ENCODE measurements at regions of chr7 and their contacts with region 1.

Region 1: DNA sequence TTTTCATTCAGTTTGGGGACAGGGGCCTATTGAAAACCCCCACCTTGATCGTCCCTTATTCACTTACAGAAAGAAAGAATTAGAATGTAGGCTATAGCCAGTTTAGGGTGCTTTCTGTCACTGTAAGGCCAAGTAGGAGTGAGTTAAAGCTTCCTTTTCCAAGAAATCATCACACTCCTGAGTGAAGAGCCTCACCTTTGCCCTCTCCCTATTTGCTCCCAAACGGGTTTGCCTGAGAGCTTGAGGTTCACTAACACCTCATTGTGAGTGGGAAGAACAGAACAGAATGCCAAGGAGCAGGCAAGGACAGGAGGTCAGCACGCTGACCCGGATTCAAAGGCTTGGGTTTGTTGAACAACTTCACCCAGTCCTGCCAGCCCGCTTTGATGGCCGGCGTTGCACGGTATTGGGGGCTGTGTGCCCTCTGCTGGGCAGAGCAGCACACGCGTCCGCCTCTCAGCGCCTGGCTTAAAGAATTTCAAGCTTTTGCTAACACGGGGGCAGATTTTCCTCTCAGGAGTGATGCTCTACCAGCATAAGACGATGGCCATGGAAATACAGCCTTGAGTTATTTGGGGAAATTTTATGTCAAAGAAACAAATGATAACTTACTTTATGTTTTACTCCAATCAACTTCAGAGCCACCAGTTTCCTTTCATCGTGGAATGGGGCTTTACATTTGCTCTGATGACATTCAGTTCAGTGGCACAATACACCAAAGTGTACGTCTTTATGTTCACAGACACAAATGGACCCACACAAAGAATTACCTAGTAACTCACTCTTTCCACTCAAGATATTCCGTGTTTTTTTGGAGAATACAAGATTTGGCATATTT is 470.0 kb downstream of the SUGCT start:
- DNase-seq: peak; percentile 51 to 76
- H3K4me3 ChIP-seq: no peak overlapping the region
- H3K27ac ChIP-seq: no peak overlapping the region
- H3K4me1 ChIP-seq: no peaks in the 10 kb centered on the region; a peak in 1 of 7 replicates
- H3K27me3 ChIP-seq: no peaks in the 10 kb centered on the region
- CTCF ChIP-seq: peak; percentile 92 to 94 (median 93)
- EP300 ChIP-seq: no peak
- POLR2A ChIP-seq: no peak
- RAD21 ChIP-seq: peak; percentile 92 to 93

Region 2: GRCh38 chr7:40331915-40332314 is 272.9 kb before region 1 on chr7:
- CTCF ChIA-PET with region 1: interaction called, 15 read pairs
- POLR2A ChIA-PET with region 1: no interaction called
- DNase-seq: no peak
- H3K4me3 ChIP-seq: no peak overlapping the region
- H3K27ac ChIP-seq: no peak overlapping the region
- H3K4me1 ChIP-seq: no peaks in the 10 kb centered on the region
- H3K27me3 ChIP-seq: no peaks in the 10 kb centered on the region
- CTCF ChIP-seq: no peak
- EP300 ChIP-seq: no peak
- POLR2A ChIP-seq: no peak
- RAD21 ChIP-seq: no peak

Region 3: DNA sequence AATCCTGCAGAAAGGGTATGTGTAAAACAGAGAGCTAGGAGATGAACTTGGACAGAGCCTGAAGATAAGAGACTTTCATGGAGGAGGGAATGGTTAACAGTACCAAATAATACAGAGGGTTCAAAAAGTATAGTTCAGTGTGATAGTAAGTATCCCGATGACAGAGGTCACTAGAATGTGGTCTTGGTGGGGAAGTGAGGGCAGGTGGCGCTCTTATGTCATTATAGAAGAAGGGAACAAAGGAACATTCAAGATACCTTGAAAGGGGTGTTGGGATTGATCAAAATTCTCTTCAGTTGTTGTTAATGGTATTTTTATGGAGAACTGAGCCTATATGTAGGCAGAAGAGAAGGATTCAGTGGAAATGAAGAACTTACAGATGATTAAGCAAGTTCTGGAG is 157.5 kb before region 1 on chr7:
- CTCF ChIA-PET with region 1: interaction called, 14 read pairs
- POLR2A ChIA-PET with region 1: no interaction called
- DNase-seq: no peak
- H3K4me3 ChIP-seq: no peak overlapping the region
- H3K27ac ChIP-seq: no peak overlapping the region
- H3K4me1 ChIP-seq: no peaks in the 10 kb centered on the region
- H3K27me3 ChIP-seq: no peaks in the 10 kb centered on the region
- CTCF ChIP-seq: peak; percentile 9 to 35 (median 28); a peak in 3 of 4 replicates
- EP300 ChIP-seq: no peak
- POLR2A ChIP-seq: no peak
- RAD21 ChIP-seq: peak; percentile 58 to 64

Region 4: DNA sequence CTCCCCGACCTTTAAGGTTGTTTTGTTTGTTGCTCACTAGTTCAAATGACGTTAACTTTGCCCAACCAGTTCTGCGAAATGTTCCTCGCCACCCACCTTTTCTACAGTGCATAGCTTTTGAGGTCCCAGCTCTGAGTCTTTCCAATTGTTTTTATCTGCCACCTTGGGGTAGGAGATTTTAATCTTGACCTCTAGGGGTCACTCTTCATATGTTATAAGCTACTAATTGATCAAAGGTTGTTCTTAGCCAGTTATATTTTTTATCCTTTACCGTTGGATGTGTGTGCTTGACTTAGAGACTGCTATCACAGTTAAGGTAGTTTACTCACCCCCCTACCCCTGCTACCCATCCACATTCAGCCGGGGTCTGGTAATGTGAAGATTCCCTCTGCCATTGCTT is 97.7 kb before region 1 on chr7:
- CTCF ChIA-PET with region 1: interaction called, 41 read pairs
- POLR2A ChIA-PET with region 1: no interaction called
- DNase-seq: no peak
- H3K4me3 ChIP-seq: no peak overlapping the region
- H3K27ac ChIP-seq: no peak overlapping the region
- H3K4me1 ChIP-seq: peaks cover 0 to 3% (median 0%) of the 10 kb centered on the region in 4 experiments; a peak in 1 of 7 replicates
- H3K27me3 ChIP-seq: no peaks in the 10 kb centered on the region
- CTCF ChIP-seq: peak in 2 of 3 experiments; percentile 15 to 37; a peak in 2 of 4 replicates
- EP300 ChIP-seq: no peak
- POLR2A ChIP-seq: no peak
- RAD21 ChIP-seq: peak; percentile 39 to 47

Region 5: DNA sequence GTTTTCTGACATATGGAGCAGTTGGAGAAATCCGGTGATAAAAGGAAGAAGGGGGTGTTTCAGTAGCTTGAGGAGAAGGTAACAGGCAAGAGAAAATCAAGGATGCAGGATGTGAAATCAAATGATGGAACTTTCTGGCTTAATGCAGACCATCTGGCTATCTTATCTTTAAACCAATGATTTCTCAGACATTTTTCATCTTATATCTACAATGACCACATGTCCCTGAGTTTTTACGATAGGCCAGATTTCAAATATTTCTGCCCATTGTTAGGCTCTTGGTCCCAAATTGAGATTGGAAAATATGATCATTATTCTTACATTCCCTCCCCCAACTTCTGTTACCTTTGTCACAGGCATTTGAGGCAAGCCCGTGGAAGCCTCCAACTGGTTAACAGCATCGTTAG is 16.8 kb after region 1 on chr7:
- CTCF ChIA-PET with region 1: interaction called, 12 read pairs
- POLR2A ChIA-PET with region 1: interaction called, 3 read pairs
- DNase-seq: no peak
- H3K4me3 ChIP-seq: no peak overlapping the region
- H3K27ac ChIP-seq: no peak overlapping the region
- H3K4me1 ChIP-seq: no peaks in the 10 kb centered on the region
- H3K27me3 ChIP-seq: no peaks in the 10 kb centered on the region
- CTCF ChIP-seq: no peak
- EP300 ChIP-seq: no peak
- POLR2A ChIP-seq: no peak
- RAD21 ChIP-seq: no peak